ENCODE measurements at regions of chr5 and their contacts with region 1.

Region 1: GRCh38 chr5:154072414-154073171 is 33.8 kb downstream of the MFAP3 start:
- DNase-seq: peak; percentile 64 to 86 (median 81)
- H3K4me3 ChIP-seq: peak overlapping the region in 4 of 59 donors; percentile 10 to 19 (median 15)
- H3K27ac ChIP-seq: peak overlapping the region in 1 of 59 donors; percentile 71
- H3K27me3 ChIP-seq: no peaks in the 10 kb centered on the region
- CTCF ChIP-seq: peak; percentile 64 to 99 (median 95)

Region 2: DNA sequence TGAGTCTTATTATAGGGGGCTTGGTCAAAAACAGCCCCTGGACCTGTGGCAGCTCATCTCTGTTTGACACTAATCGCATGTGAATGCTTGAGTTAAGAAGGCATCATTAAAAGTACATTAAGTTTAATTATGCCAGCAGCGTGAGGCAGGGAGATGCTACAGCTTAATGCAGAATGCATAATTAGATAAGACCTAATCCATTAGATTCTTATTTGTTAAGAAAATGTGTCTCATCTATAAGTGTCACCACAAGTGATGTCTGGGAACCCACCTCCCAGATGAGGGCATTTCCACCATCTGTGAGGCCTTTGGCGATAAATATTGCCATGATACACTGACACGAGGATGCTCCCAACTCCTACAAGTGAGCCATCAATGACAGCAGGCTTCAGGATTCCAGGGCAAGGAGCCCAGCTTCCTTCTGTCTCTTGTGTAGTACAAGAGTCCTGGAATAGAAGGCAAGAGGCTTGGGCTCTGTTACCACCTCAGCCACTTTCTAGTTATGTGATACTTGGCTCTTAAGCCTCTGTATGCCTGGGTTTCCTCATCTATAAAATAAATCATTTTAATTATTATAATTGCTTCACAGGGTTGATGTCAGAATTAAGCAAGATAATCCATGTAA is 236.6 kb before region 1 on chr5:
- intact Hi-C with region 1: no loop called
- DNase-seq: no peak
- H3K4me3 ChIP-seq: no peak overlapping the region
- H3K27ac ChIP-seq: no peak overlapping the region
- H3K27me3 ChIP-seq: no peaks in the 10 kb centered on the region
- CTCF ChIP-seq: no peak

Region 3: GRCh38 chr5:153883854-153884611 is 188.6 kb before region 1 on chr5:
- intact Hi-C with region 1: no loop called
- DNase-seq: no peak
- H3K4me3 ChIP-seq: no peak overlapping the region
- H3K27ac ChIP-seq: no peak overlapping the region
- H3K27me3 ChIP-seq: no peaks in the 10 kb centered on the region
- CTCF ChIP-seq: no peak

Region 4: GRCh38 chr5:154179846-154180710 is 107.5 kb after region 1 on chr5:
- intact Hi-C with region 1: loop called (anchors 1 to 10 kb)
- DNase-seq: peak in 2 of 10 donors; percentile 27 to 43
- H3K4me3 ChIP-seq: no peak overlapping the region
- H3K27ac ChIP-seq: no peak overlapping the region
- H3K27me3 ChIP-seq: no peaks in the 10 kb centered on the region
- CTCF ChIP-seq: peak; percentile 54 to 84 (median 77)

Region 5: DNA sequence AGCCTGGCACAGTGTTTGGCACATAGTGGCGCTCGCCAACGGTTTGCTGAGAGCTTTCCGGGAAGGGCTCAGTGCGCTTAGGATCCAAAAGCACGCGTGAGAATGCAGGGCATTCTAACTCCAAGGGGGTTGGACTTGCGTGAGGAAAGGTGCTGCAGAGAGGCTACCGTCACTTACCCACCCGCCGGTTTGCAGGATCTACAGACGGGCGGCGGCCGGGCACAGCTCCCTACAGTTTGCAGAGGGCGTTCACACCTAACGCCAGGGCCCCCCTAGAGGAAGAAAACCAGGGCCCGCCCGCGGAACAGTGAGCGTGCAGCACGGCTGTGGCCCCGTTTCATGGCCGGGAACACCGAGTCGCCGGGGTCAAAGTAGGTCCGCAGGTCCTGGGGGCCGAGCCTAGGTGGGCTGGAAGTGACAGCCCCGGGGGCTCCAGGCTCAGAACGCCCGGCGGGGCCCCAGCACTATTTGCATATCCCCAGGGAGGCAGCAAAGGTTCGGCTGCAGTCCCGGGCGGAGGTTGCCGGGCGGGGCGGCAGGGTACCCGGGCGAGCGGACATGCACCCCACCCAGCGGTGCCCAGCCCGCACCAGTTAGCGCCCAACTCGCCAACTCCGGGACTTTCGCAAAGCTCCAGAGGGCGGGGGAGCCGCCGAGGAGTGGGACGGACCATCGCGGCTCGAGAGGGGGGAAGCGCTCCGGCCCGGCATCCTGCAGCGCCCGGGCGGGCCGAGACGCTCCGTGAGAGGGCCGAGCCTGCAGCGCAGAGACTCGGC is 117.4 kb after region 1 on chr5:
- intact Hi-C with region 1: loop called (anchors 5 to 10 kb)
- DNase-seq: peak; percentile 62 to 86 (median 80)
- H3K4me3 ChIP-seq: peak overlapping the region; percentile 53 to 98 (median 89)
- H3K27ac ChIP-seq: peak overlapping the region in 47 of 59 donors; percentile 4 to 89 (median 67)
- H3K27me3 ChIP-seq: no peaks in the 10 kb centered on the region
- CTCF ChIP-seq: peak in 50 of 56 donors; percentile 0 to 67 (median 43)

Region 6: DNA sequence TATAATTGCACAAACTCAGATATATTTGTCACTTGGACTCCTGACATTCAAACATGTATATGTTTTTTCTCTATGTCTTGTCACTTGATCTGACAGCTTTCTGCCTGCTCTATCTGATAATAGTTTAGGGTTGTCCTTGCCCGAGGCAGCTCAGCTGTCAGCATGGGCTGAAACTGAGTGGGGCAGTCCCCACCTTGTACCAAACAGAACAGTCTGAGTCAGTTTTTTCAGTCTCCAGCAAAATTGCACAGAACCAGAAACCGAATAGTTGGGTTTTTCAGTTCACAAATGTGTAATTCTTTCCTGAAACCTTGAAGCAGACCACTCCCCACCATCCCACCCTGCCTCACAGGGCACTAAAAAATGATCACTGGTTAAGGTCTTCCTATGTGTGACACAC is 414.9 kb after region 1 on chr5:
- intact Hi-C with region 1: no loop called
- DNase-seq: peak in 1 of 10 donors; percentile 2
- H3K4me3 ChIP-seq: no peak overlapping the region
- H3K27ac ChIP-seq: no peak overlapping the region
- H3K27me3 ChIP-seq: peaks cover 16 to 96% (median 73%) of the 10 kb centered on the region in 45 donors
- CTCF ChIP-seq: no peak

Region 7: DNA sequence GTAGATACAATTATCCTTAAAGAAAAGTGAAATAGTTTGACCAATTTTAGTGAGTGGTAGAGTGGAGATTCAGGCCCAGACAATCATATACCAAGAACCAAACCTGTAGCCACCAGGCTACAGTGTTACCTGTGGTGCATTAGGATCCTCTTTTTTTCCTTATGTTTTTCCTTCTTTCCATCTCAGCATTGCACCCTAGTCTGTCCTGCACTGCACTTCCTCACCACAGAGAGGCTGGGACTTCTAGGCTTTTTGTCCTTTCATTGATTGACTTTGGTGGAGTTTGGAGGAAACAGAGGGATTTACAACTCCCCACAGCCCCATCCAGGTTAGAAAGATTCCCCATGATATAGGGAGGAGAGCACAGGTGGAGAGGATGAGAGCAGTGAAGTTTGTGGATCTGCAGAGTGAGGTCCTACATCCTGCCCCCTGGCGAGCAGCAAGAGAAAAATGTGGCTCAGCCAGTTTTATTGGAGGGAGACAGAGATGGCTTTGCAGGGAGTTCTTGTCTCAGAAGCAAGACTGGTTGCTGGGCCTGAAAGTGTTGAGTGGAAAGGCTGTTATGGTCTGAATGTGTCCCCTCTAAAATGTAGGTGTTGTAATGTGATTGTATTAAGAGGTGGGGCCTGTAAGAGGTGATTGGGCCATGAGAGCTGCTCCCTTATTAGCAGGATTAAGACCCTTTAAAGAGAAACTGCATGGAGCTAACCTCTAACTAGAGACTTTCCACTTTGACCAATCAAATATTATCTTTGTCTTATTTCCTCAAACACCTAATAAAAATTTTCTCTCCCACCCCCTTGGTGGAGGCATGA is 977.2 kb after region 1 on chr5:
- intact Hi-C with region 1: no loop called
- DNase-seq: no peak
- H3K4me3 ChIP-seq: no peak overlapping the region
- H3K27ac ChIP-seq: no peak overlapping the region
- H3K27me3 ChIP-seq: peaks cover 0 to 10% (median 0%) of the 10 kb centered on the region in 45 donors
- CTCF ChIP-seq: no peak

Measured in dorsolateral prefrontal cortex (tissue), 120 donors.